Vagina (tissue), 2 donors: ENCODE measurements at regions of chr4 and their contacts with region 1.

Region 1: DNA sequence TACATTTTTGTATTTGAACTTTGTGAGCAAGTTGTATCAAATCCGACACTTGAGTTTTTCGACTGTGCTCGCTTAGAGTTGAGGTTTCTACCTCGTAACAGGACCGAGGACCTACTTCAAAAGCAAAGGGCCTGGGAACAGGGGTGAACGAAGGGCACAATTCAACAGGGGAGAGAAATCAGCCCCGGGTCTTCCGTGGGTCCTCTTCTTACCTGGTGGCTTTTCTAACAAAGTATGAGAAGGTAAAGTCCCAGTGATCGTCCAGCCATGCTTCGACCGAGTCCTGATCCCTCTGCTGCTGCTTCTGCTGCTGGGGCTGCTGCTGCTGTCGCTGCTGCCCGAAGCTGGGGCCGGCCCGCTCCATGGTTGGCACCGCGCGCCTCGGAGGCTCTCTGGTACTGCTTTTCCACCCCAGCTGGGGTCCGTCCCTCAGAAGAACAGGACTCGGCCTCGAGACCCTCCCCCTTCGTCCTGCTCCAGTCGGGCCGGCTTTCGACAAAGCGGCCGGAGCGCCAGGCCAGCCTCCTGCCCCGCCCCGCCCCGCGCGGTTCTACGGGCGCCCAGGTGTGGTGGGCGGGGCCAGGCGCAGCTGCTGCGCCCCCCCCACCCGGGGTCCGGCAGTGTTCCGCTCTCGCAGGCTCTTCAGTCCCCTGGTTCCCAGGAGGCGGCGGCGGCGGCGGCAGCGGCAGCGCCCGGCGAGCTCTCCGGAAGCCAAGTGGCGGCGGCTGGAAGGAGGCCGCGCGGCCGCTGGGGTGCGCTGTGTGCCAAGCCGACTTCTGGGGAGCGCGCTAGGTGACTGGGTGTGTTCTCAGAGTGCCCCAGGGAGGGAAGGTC is at the start of gene PDE5A:
- DNase-seq: peak in 1 of 2 donors; percentile 90
- H3K4me3 ChIP-seq: peak within 1 kb of the TSS; percentile 82 to 85
- H3K27ac ChIP-seq: peak within 1 kb of the TSS; percentile 99
- H3K4me1 ChIP-seq: peaks cover 19% of the 10 kb centered on the region
- H3K27me3 ChIP-seq: no peaks in the 10 kb centered on the region
- CTCF ChIP-seq: peak; percentile 51 to 78 (median 61)
- POLR2A ChIP-seq: no peak
- total RNA-seq, gene PDE5A: 23.1 TPM

Region 2: GRCh38 chr4:119314356-119314755 is 314.2 kb before region 1 on chr4:
- intact Hi-C with region 1: loop called (anchors 10 kb)
- DNase-seq: no peak
- H3K4me3 ChIP-seq: no peak overlapping the region
- H3K27ac ChIP-seq: no peak overlapping the region
- H3K4me1 ChIP-seq: no peaks in the 10 kb centered on the region
- H3K27me3 ChIP-seq: no peaks in the 10 kb centered on the region
- CTCF ChIP-seq: peak in 1 of 3 experiments; percentile 12
- POLR2A ChIP-seq: no peak

Region 3: DNA sequence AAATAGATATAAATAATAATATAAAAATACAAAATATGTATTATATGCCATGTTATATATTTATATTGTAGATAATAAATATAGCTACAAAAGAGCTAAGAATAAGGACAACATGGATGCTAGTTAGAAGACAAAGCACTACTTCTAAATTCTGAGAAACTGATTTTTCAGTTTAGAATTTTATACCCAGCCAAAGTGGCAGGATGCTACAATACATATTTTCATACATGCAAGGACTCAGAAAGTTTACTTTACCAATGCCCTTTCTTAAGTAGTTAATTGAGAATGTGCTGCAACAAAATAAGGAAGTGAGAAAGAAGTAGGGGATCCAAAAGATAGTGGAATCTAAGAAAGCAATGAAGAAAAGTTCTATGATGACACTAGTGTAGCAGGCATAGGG is 64.4 kb before region 1 on chr4:
- intact Hi-C with region 1: loop called (anchors 5 kb)
- DNase-seq: no peak
- H3K4me3 ChIP-seq: no peak overlapping the region
- H3K27ac ChIP-seq: no peak overlapping the region
- H3K4me1 ChIP-seq: no peaks in the 10 kb centered on the region
- H3K27me3 ChIP-seq: no peaks in the 10 kb centered on the region
- CTCF ChIP-seq: no peak
- POLR2A ChIP-seq: no peak

Region 4: DNA sequence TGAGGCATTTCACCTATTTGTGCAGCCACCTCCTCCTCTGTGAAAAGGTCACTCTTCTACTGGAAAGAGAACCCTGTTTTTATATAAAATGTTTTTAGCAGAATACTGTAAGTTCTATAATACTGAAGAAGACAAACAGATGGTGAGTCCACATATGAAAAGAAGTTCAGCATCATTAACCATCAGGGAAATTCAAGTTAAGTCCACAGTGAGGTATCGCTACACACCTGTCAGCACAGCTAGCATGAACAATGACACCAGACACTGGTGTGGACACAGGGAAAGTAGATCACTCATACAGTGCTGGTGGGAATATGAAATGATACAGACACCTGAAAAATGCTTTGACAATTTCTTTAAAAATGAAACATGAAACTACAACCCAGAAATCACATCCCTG is 305.1 kb after region 1 on chr4:
- intact Hi-C with region 1: no loop called
- DNase-seq: no peak
- H3K4me3 ChIP-seq: no peak overlapping the region
- H3K27ac ChIP-seq: no peak overlapping the region
- H3K4me1 ChIP-seq: peaks cover 7% of the 10 kb centered on the region
- H3K27me3 ChIP-seq: no peaks in the 10 kb centered on the region
- CTCF ChIP-seq: no peak
- POLR2A ChIP-seq: no peak

Region 5: DNA sequence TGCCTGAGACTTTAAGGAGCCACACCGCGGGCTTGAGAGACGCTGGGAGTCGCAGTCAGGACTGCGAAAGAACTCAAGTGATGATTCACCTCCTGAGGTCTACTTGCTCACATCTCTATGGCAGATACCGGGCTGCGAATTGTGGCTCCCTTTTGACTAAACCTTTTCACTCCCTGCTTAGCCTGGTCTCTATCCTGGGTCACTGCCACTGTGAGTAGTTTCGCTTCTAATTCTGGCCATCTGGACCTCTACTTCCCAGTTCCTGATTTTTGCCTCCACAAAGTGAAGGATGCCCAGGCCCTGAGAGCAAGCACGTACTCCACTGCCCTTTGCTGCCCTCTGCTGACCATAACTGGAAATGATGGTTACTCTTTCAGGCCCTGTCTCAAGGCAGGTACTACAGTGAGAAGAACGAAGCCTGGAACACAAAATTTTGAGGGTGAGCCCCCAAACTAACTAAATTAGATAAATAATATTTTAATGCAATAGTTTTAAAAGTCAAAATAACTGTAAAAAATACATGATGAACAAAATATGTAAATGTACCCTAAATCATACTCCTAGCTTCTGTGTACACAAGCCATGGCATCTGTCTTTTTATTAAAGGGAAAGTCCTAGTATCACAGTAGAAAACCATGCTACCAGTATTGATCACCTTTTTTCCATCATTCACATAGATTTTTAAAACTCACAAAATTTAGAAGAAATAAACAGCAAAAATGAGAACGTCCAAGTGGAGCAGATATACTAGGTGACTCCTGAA is 421.4 kb after region 1 on chr4:
- intact Hi-C with region 1: loop called (anchors 5 kb)
- DNase-seq: peak in 1 of 2 donors; percentile 90
- H3K4me3 ChIP-seq: peak overlapping the region; percentile 22 to 23
- H3K27ac ChIP-seq: peak overlapping the region; percentile 70
- H3K4me1 ChIP-seq: no peaks in the 10 kb centered on the region
- H3K27me3 ChIP-seq: no peaks in the 10 kb centered on the region
- CTCF ChIP-seq: peak; percentile 64 to 86 (median 75)
- POLR2A ChIP-seq: no peak